CD4-positive, alpha-beta memory T cell (primary cell): ENCODE measurements at regions of chr2 and their contacts with region 1.

Region 1: GRCh38 chr2:218269899-218270720 is at the starts of genes AAMP and PNKD:
- DNase-seq: peak; percentile 100
- H3K4me3 ChIP-seq: peak within 1 kb of the TSS; percentile 80 to 91
- H3K4me3 Mint-ChIP-seq: peak within 1 kb of the TSS; percentile 87 to 96 (median 94)
- H3K27ac ChIP-seq: peak within 1 kb of the TSS; percentile 84
- H3K27ac Mint-ChIP-seq: peak within 1 kb of the TSS; percentile 92 to 96 (median 93)
- H3K4me1 ChIP-seq: peaks cover 34% of the 10 kb centered on the region
- H3K4me1 Mint-ChIP-seq: peaks cover 34 to 60% (median 48%) of the 10 kb centered on the region in 4 donors
- H3K27me3 ChIP-seq: no peaks in the 10 kb centered on the region
- H3K27me3 Mint-ChIP-seq: no peaks in the 10 kb centered on the region
- total RNA-seq, gene AAMP: 66.2 to 66.3 TPM
- total RNA-seq, gene PNKD: 31.1 to 33.6 TPM

Region 2: DNA sequence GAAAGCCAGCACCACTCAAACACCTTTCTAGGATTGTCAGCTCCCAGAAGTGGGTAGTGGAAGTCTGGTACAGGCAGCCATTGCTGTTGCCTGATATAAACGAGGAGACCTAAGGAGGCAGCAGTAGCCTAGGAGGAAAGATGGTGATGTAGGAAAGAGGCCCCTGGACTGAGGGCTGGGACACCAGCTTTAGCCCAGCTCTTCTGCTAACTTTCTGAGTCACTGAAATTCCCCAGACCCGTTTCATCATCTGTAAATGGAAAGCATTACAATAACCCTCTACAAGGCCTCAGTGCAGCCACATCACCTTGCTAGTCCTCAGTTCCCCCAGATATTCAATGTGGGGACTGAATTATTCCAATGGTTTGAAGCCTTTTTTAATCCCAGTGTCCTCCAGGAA is 603.8 kb before region 1 on chr2:
- CTCF ChIA-PET with region 1: no interaction called
- POLR2A ChIA-PET with region 1: no interaction called
- intact Hi-C with region 1: no loop called
- DNase-seq: no peak
- H3K4me3 ChIP-seq: no peak overlapping the region
- H3K4me3 Mint-ChIP-seq: no peak overlapping the region
- H3K27ac ChIP-seq: no peak overlapping the region
- H3K27ac Mint-ChIP-seq: peak overlapping the region in 1 of 7 donors; percentile 31
- H3K4me1 ChIP-seq: no peaks in the 10 kb centered on the region
- H3K4me1 Mint-ChIP-seq: peaks cover 1 to 7% (median 4%) of the 10 kb centered on the region in 4 donors
- H3K27me3 ChIP-seq: no peaks in the 10 kb centered on the region
- H3K27me3 Mint-ChIP-seq: no peaks in the 10 kb centered on the region

Region 3: DNA sequence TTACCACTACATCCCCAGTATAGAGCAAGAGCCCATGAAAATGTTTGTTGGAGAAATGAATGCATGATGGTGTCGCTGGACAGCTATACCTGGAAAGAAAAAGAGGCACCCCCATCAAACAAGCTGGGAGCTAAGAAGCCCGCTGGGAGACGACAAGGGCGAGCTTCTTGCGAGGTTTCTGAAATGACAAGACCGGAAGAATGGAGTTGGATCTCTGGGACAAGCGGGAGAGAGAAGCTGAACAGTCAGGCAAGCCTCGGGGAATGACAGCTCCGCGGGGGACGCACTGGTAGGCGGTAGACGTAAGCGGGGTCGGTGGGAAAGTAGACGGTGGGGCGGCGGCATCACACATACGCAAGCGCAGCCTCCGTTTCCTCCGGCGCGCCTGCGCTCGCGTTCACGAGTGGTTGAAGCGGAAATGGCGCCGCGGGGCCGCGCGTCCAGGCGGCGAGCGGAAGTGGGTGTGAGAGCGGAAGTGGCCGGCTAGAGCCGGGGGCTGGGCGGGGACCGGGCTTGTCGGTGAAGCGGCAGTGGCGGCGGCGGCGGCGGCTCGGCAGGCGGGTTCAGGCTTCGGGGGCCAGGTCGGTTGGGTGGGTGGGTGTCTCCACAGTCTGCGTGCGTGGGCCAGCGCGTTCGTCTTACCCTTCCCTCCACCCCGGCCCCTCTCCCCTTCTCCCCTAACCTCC is 53.3 kb before region 1 on chr2 and contains the start of gene ARPC2:
- CTCF ChIA-PET with region 1: interaction called, 13 read pairs
- POLR2A ChIA-PET with region 1: interaction called, 40 read pairs
- intact Hi-C with region 1: loop called (anchors 1 kb)
- DNase-seq: peak; percentile 92 to 97 (median 96)
- H3K4me3 ChIP-seq: peak within 1 kb of the TSS; percentile 85 to 97
- H3K4me3 Mint-ChIP-seq: peak within 1 kb of the TSS; percentile 89 to 98 (median 96)
- H3K27ac ChIP-seq: peak within 1 kb of the TSS; percentile 93
- H3K27ac Mint-ChIP-seq: peak within 1 kb of the TSS; percentile 93 to 99 (median 97)
- H3K4me1 ChIP-seq: peaks cover 39% of the 10 kb centered on the region
- H3K4me1 Mint-ChIP-seq: peaks cover 28 to 52% (median 38%) of the 10 kb centered on the region in 4 donors
- H3K27me3 ChIP-seq: no peaks in the 10 kb centered on the region
- H3K27me3 Mint-ChIP-seq: no peaks in the 10 kb centered on the region
- total RNA-seq, gene ARPC2: 412 to 414 TPM

Region 4: DNA sequence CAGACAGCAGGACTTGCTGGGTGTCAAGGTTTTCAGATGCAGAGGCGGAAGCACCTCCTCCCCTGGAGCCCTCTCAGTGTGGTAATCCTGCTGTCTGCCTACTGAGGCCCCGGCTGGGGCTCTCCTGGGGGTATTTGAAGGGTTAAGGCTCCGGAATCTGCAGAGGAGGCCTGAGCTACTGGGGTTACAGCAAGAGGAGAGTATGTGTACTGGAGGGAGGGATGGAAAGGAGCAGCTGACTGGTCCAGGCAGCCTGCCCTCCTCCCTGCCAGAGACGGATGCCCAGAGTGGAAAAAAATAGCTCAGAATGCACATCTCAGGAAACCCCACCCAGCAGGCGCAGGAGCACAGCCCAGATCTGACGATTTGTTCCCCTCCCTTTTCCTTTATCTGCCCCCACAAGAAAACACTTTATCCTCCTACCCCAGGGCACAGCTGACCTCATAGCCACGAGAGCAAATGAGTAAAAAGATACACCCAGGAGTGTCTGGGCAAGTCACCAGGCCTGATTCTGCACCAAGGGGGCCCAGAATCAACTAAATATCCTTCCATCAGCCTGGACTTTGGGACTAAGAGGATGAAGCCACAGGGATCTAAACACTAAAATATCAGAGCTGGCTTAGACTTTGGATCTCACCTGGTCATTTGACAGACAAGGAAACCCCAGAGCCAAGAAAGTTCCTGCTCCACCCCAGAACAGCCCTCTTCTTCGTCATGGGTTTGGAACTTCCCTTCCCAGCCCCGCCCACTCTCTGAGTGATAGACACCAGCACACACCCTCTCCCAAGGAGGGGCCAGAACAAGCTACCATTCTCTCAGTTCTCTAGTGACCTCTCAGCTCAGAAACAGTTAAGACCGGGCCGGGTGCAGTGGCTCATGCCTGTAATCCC is 16.7 kb after region 1 on chr2:
- CTCF ChIA-PET with region 1: interaction called, 446 read pairs
- POLR2A ChIA-PET with region 1: interaction called, 188 read pairs
- intact Hi-C with region 1: loop called (anchors 1 kb)
- DNase-seq: peak; percentile 84 to 97 (median 87)
- H3K4me3 ChIP-seq: peak overlapping the region; percentile 53 to 86
- H3K4me3 Mint-ChIP-seq: peak overlapping the region; percentile 90 to 97 (median 91)
- H3K27ac ChIP-seq: peak overlapping the region; percentile 94
- H3K27ac Mint-ChIP-seq: peak overlapping the region; percentile 98 to 100 (median 99)
- H3K4me1 ChIP-seq: peaks cover 92% of the 10 kb centered on the region
- H3K4me1 Mint-ChIP-seq: peaks cover 55 to 95% (median 73%) of the 10 kb centered on the region in 4 donors
- H3K27me3 ChIP-seq: no peaks in the 10 kb centered on the region
- H3K27me3 Mint-ChIP-seq: no peaks in the 10 kb centered on the region

Region 5: DNA sequence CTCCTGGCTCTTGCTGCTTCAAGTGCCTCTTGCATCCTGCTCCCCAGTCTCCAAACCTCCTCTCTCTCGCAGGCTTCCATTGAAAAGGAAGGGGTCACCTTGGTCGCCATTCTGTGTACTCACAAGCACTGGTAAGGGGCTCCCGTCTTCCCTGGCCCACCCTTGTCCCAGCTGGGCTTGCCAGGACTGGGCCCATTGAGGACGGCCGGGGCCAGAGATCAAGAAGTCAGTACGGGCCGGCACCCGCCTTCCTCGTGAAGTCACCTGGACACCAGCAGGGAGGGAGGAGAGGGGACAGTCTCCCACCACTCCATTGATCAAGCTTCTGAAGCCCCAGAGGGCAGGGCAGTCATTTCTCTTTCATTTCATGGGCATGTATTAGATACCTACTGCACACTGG is 70.5 kb after region 1 on chr2:
- CTCF ChIA-PET with region 1: no interaction called
- POLR2A ChIA-PET with region 1: no interaction called
- intact Hi-C with region 1: no loop called
- DNase-seq: no peak
- H3K4me3 ChIP-seq: no peak overlapping the region
- H3K4me3 Mint-ChIP-seq: no peak overlapping the region
- H3K27ac ChIP-seq: no peak overlapping the region
- H3K27ac Mint-ChIP-seq: peak overlapping the region in 1 of 7 donors; percentile 23
- H3K4me1 ChIP-seq: no peaks in the 10 kb centered on the region
- H3K4me1 Mint-ChIP-seq: peaks cover 0 to 2% (median 0%) of the 10 kb centered on the region in 4 donors
- H3K27me3 ChIP-seq: no peaks in the 10 kb centered on the region
- H3K27me3 Mint-ChIP-seq: peaks cover 0 to 2% of the 10 kb centered on the region in 2 donors

Region 6: DNA sequence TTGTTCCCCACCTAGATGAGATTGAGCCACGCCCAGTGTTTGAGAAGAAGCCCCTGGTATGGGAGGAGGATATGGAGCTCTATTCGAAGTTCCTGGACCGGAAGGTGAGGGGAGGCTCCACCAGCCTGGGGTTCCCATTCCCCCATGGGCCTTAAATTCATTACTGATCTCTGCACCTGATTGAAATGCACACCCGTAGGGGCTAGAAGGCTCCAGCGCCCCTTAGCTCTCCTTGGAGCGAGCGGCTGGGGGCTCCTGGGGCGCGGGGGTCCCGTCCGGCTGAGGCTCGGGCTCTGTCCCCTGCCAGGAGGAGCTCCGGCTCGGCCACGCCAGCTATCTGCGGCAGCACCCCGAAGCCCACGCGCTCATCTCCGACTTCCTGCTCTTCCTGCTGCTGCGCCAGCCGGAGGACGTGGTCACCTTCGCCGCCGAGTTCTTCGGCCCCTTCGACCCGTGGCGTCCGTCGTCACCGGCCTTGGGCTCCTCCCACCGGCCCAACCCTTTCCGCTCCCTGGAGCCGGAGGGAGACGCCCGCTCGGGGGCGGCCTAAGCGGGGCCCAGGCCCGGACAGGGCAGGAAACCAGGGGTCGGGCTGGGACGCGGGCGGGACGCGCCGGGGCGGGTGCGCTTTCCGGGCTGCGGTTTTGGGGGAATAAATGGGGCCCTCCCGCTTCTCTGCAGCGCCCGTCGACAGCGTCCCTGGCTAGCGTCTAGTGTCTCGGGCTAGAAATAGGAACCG is 97.5 kb after region 1 on chr2:
- CTCF ChIA-PET with region 1: interaction called, 6 read pairs
- POLR2A ChIA-PET with region 1: interaction called, 12 read pairs
- intact Hi-C with region 1: no loop called
- DNase-seq: peak; percentile 64 to 74 (median 71)
- H3K4me3 ChIP-seq: peak overlapping the region; percentile 42 to 60
- H3K4me3 Mint-ChIP-seq: peak overlapping the region; percentile 74 to 89 (median 82)
- H3K27ac ChIP-seq: peak overlapping the region; percentile 42
- H3K27ac Mint-ChIP-seq: peak overlapping the region; percentile 84 to 96 (median 90)
- H3K4me1 ChIP-seq: peaks cover 28% of the 10 kb centered on the region
- H3K4me1 Mint-ChIP-seq: peaks cover 13 to 33% (median 25%) of the 10 kb centered on the region in 4 donors
- H3K27me3 ChIP-seq: no peaks in the 10 kb centered on the region
- H3K27me3 Mint-ChIP-seq: no peaks in the 10 kb centered on the region

Region 7: DNA sequence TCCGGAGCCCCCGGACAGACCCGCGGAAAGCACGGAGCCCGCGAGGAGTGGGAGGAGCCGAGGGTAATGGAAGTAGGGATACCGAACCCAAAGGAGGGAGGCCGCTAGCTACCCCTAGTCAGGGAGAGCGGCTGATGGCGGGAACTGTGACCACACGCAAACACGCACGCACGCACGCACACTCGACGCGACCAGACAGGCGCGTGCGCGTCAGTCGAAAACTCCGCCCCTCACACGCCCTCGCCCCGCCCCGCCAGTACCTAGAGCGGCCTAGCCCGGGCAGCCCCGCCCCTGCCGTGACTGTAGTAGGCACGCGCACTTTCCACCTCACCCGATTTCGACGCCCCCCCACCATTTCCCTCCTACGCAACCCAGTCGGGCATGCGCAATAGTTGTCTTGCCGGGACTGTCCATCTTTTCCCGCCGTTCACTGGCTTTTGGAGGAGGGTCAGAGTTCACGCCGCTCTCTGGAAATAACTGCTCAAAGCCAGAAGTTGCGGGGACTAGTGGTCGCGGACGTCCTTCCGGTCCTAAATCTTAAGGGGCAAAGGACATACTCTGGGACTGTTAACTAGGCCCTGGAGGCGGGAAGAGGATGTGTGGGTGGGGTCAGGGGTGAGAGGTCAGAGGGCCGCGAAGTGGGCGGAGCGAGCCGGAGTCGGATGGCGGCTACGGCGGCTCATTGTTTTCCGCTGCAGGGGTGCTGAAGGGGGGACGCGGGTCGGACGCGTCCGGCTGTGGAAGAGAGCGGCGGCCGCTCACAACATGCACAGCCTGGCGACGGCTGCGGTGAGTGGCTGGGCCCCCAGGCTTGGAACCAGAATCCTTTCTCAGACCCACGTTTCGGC is 298.3 kb after region 1 on chr2 and contains the starts of genes CNOT9 and USP37:
- CTCF ChIA-PET with region 1: no interaction called
- POLR2A ChIA-PET with region 1: interaction called, 3 read pairs
- intact Hi-C with region 1: loop called (anchors 1 kb)
- DNase-seq: peak; percentile 99 to 100 (median 100)
- H3K4me3 ChIP-seq: peak within 1 kb of the TSS; percentile 67 to 84
- H3K4me3 Mint-ChIP-seq: peak within 1 kb of the TSS; percentile 90 to 99 (median 97)
- H3K27ac ChIP-seq: peak within 1 kb of the TSS; percentile 99
- H3K27ac Mint-ChIP-seq: peak within 1 kb of the TSS; percentile 96 to 100 (median 100)
- H3K4me1 ChIP-seq: peaks cover 43% of the 10 kb centered on the region
- H3K4me1 Mint-ChIP-seq: peaks cover 48 to 78% (median 57%) of the 10 kb centered on the region in 4 donors
- H3K27me3 ChIP-seq: no peaks in the 10 kb centered on the region
- H3K27me3 Mint-ChIP-seq: no peaks in the 10 kb centered on the region
- total RNA-seq, gene CNOT9: 53.9 to 58.0 TPM
- total RNA-seq, gene USP37: 28.2 to 29.1 TPM

Region 8: DNA sequence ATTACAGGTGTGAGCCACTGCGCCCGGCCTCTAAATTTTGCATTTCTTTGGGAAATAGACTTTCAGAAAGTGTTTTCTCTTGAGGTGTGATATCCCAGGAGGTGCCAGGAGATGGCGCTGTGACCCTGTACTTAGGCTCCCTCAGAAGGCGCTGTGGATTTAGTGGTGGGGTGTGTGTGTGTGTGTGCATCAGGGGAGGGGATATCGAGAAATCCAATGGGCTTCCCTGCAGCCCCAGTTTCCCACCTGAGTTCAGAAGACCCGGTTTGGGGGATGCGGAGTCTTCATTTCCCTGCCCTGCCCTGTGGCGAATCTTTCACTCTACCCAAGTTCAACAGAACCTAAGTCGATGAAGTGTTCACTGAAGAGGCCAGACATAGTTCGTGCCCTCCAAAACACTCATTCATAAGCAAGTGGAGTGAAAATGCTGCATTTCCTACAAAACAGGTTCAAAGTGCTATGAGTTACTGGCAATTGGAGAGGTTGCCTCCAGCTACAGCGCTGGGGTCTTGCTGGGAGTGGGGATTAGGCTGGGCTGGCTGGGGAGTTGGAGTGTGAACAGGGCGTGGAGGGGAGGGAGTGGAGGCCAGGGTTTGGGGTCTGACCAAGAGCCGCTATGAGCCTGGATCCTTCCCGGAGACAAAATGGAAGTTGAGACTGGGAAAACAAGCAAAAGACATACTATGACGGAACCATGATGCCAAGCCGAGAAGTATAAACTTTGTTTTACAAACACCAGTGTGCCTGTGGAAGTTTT is 583.0 kb after region 1 on chr2:
- CTCF ChIA-PET with region 1: interaction called, 11 read pairs
- POLR2A ChIA-PET with region 1: no interaction called
- intact Hi-C with region 1: no loop called
- DNase-seq: peak; percentile 58 to 67 (median 62)
- H3K4me3 ChIP-seq: no peak overlapping the region
- H3K4me3 Mint-ChIP-seq: peak overlapping the region in 1 of 8 donors; percentile 31
- H3K27ac ChIP-seq: no peak overlapping the region
- H3K27ac Mint-ChIP-seq: peak overlapping the region in 2 of 7 donors; percentile 57 to 70
- H3K4me1 ChIP-seq: no peaks in the 10 kb centered on the region
- H3K4me1 Mint-ChIP-seq: peaks cover 0 to 9% (median 4%) of the 10 kb centered on the region in 4 donors
- H3K27me3 ChIP-seq: peaks cover 15% of the 10 kb centered on the region
- H3K27me3 Mint-ChIP-seq: peaks cover 33 to 52% of the 10 kb centered on the region in 2 donors